ENCODE measurements at regions of chr7 and their contacts with region 1.

Region 1: GRCh38 chr7:24741691-24742504 is 15.4 kb downstream of the GSDME start:
- DNase-seq: peak; percentile 74 to 91
- H3K4me3 ChIP-seq: no peak overlapping the region
- H3K4me3 Mint-ChIP-seq: peak overlapping the region; percentile 57
- H3K27ac Mint-ChIP-seq: peak overlapping the region; percentile 98
- H3K4me1 ChIP-seq: peaks cover 61% of the 10 kb centered on the region
- H3K4me1 Mint-ChIP-seq: peaks cover 52% of the 10 kb centered on the region
- H3K27me3 ChIP-seq: no peaks in the 10 kb centered on the region
- H3K27me3 Mint-ChIP-seq: no peaks in the 10 kb centered on the region
- CTCF ChIP-seq: no peak

Region 2: GRCh38 chr7:24304494-24305095 is 437.3 kb before region 1 on chr7:
- CTCF ChIA-PET with region 1: no interaction called
- POLR2A ChIA-PET with region 1: no interaction called
- intact Hi-C with region 1: no loop called
- DNase-seq: no peak
- H3K4me3 ChIP-seq: no peak overlapping the region
- H3K4me3 Mint-ChIP-seq: no peak overlapping the region
- H3K27ac Mint-ChIP-seq: no peak overlapping the region
- H3K4me1 ChIP-seq: no peaks in the 10 kb centered on the region
- H3K4me1 Mint-ChIP-seq: no peaks in the 10 kb centered on the region
- H3K27me3 ChIP-seq: no peaks in the 10 kb centered on the region
- H3K27me3 Mint-ChIP-seq: peaks cover 21% of the 10 kb centered on the region
- CTCF ChIP-seq: no peak

Region 3: DNA sequence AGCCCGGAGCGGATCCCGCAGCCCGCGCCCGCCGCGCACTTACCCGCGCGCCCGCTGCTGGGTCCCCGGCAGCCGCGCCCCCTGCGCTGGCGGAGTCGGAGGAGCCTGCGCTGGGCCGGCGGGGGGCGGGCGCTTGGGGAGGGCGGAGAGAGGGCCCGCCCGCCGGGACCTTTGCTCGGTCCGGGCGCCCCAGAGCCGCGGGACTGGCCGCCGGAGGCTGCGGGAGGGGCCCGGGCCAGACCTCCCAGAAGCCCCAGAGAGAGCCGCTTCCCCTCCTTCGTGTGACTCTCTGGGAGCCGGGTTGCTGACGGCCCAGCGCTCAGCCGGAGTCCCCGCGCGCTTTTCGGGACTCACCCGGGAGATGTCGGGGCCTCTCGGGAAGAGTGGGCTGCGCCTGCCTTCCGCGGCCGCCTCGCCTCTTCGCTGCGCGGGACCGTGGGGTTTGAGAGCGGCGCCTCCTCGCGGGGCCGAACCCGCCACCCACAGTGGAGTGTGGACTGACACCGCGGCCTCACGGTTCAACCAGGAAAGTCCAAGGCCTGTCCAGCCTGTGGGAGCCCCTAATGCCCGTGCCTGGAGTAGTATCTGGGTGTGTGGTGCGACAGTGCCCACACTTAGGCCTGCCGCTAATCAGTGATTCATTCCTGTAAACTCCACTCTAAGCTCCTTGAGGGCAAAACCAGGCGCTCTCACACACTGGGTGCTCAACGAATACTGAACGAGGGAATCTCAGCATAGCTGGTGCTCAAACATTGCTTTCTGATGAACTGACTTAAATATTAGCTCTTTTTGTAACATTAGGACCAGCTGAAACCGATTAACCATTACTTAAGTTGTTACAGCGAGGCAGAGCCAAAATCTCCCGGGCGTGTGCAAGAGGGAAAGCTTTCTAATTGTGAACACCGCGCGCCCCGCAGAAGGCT is 15.7 kb after region 1 on chr7 and contains the start of gene GSDME:
- CTCF ChIA-PET with region 1: interaction called, 6 read pairs
- POLR2A ChIA-PET with region 1: interaction called, 6 read pairs
- intact Hi-C with region 1: loop called (anchors 1 kb)
- DNase-seq: peak; percentile 82 to 89
- H3K4me3 ChIP-seq: peak within 1 kb of the TSS; percentile 83
- H3K4me3 Mint-ChIP-seq: peak within 1 kb of the TSS; percentile 94
- H3K27ac Mint-ChIP-seq: peak within 1 kb of the TSS; percentile 69
- H3K4me1 ChIP-seq: peaks cover 16% of the 10 kb centered on the region
- H3K4me1 Mint-ChIP-seq: peaks cover 9% of the 10 kb centered on the region
- H3K27me3 ChIP-seq: no peaks in the 10 kb centered on the region
- H3K27me3 Mint-ChIP-seq: no peaks in the 10 kb centered on the region
- CTCF ChIP-seq: peak in 1 of 2 experiments; percentile 3
- total RNA-seq, gene GSDME: 32.9 and 35.2 TPM in 2 replicates

Region 4: GRCh38 chr7:24788961-24789576 is 47.2 kb after region 1 on chr7:
- CTCF ChIA-PET with region 1: no interaction called
- POLR2A ChIA-PET with region 1: interaction called, 3 read pairs
- intact Hi-C with region 1: loop called (anchors 1 kb)
- DNase-seq: no peak
- H3K4me3 ChIP-seq: no peak overlapping the region
- H3K4me3 Mint-ChIP-seq: no peak overlapping the region
- H3K27ac Mint-ChIP-seq: no peak overlapping the region
- H3K4me1 ChIP-seq: peaks cover 23% of the 10 kb centered on the region
- H3K4me1 Mint-ChIP-seq: peaks cover 13% of the 10 kb centered on the region
- H3K27me3 ChIP-seq: no peaks in the 10 kb centered on the region
- H3K27me3 Mint-ChIP-seq: no peaks in the 10 kb centered on the region
- CTCF ChIP-seq: no peak